Right ventricle myocardium inferior (tissue), 1 donor: ENCODE measurements at regions of chr3 and their contacts with region 1.

Region 1: DNA sequence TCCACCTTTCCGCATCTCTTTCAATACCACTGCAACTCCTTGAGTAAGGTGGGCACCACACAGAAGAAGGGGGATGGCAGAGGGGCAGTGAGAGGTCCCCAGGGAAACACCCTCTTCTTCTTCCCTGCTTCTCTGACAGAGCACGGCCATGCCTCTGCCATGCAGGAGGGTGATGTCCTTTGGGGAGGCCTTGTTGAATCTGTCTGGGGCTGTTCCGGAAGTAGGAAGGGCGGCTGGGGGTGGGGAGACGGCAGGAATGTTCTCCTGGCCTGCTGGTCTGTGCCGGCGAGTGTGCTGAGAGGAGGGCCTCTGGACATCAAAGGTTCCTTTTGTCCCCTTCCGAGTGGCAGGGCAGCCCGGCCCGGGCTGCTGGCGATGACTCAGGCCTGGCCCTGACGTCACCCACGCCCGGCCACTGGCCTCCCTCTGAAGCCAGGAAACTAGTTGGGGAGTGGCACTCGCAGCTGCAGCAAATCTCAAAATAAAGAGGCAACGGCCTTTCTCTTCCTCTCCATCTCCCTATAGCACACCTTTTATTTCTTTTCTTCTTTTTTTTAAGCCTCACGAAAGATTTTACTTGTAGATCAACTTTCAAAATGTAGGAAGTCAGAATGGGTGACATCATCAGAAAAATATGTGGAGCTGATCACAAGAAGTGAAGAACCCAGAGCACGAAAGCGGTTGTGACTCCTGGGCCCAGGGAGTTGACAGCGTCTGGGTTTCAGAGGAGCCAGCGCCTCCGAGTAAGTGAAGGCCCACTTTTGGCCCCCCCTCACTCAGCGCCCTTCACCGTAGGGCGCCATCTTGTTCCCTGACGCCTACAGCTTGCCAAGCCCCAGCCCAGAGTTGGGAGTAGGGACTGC is at the start of gene ZBTB38:
- DNase-seq: peak; percentile 91
- ATAC-seq: peak; percentile 93
- total RNA-seq, gene ZBTB38: 102 TPM

Region 2: GRCh38 chr3:141402476-141403171 is 34.3 kb after region 1 on chr3:
- intact Hi-C with region 1: loop called (anchors 2 kb)
- DNase-seq: peak; percentile 85
- ATAC-seq: peak; percentile 82

Region 3: DNA sequence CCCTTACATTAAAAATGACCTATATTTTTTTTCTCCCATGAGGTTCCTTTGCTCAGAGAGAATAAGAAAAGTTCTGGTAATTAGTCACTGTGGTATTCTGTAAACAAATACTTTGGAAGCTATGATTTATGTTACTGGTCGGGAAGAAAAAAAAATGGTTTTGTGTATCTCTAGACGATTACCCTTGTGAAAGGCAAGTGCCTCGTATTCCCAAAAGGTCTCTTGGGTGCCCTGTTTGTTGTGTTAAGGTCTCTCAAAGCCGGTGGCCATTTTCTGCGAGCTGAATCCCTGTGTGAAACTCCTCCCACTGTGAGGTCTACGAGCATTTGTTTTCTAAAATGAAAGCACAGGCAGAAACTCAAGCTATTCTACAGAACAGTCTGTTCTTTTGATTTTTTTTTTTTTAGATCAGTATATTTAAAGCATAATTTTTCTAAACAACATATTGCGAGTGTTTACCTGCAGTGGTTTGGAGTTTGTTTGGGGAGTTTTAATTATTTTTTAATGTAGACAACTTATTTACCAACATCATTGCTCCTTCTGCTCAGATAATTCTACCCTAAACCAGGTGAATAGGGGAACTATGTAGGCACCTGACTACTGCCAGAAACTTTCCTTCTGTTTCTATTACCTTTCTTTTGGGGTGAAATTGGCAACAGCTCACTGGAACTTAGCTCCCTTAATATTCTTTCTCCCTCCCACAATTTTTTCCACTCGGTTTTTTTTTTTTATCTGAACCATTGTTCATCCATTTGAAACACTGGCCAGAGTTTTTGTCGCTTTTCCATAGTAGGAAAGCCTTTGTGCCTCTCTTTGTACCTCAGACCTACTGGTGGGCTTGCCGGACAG is 44.0 kb after region 1 on chr3:
- intact Hi-C with region 1: loop called (anchors 2 kb)
- DNase-seq: peak; percentile 75
- ATAC-seq: peak; percentile 66